Activated naive CD4-positive, alpha-beta T cell treated with anti-CD3 and anti-CD28 coated beads for 36 hours (primary cell): ENCODE measurements at regions of chr6 and their contacts with region 1.

Region 1: DNA sequence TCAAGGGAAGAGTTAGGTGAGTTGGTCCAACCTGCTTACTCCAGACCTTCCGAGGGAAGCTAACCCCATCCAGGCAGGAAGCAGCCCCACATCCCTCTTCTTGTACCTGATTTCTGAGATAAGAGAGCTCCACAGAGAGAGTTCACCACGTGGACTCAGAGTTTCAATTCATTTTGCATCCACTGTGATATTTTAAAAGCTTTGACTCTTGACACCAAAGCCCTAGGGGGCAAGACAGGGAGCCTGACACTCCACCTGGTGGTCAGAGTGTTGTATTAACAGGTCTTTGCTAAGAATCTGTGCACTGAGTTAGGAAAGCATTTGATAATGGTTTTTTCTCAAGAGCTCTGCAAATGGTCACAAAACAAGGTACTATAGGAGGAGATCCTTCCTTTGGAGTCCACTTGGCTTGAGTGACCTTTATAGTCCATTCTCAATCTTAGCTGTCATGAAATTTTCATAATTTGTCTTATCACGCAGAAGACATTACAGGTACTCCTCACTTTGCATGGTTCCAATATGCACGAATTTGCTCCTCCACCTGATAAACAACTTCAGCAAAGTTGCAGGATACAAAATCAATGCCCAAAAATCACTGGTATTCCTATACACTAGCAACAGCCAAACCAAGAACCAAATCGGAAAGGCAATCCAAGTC is 56.2 kb upstream of the RIPOR2 start:
- DNase-seq: peak; percentile 89
- H3K4me3 Mint-ChIP-seq: peak overlapping the region; percentile 37
- H3K27ac Mint-ChIP-seq: peak overlapping the region; percentile 86
- H3K4me1 Mint-ChIP-seq: peaks cover 68% of the 10 kb centered on the region
- H3K27me3 Mint-ChIP-seq: no peaks in the 10 kb centered on the region

Region 2: DNA sequence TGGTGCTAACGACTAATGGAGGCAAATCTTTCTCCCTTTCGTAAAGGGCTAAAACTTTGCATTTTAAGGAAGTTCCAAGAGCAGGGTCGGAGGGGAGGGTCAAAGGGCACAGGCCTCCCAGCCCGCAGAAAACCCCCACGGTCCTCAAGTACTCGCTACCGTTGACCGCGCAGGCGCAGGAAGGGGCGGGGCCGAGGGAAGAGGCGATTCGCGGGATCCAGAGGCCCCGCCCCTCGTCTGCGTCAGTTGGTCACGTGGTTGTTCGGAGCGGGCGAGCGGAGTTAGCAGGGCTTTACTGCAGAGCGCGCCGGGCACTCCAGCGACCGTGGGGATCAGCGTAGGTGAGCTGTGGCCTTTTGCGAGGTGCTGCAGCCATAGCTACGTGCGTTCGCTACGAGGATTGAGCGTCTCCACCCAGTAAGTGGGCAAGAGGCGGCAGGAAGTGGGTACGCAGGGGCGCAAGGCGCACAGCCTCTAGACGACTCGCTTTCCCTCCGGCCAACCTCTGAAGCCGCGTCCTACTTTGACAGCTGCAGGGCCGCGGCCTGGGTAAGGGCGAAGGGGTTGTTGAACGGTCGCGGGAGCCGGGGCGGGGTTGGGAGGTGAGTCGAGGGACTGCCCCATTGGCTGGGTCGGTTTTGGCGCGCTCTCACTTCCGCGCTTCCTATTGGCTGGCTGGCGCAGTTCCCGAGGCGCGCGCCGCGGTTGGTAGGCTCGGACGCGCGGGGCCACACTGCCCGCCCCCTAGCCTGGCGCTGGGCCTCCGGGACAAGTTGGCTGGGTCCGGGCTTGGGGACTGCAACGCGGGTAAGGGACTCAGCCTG is 217.0 kb before region 1 on chr6 and contains the start of gene GMNN:
- CTCF ChIA-PET with region 1: no interaction called
- intact Hi-C with region 1: loop called (anchors 1 kb)
- DNase-seq: peak; percentile 99
- H3K4me3 Mint-ChIP-seq: peak within 1 kb of the TSS; percentile 96
- H3K27ac Mint-ChIP-seq: peak within 1 kb of the TSS; percentile 98
- H3K4me1 Mint-ChIP-seq: peaks cover 30% of the 10 kb centered on the region
- H3K27me3 Mint-ChIP-seq: no peaks in the 10 kb centered on the region
- total RNA-seq, gene GMNN: 84.9 to 85.1 TPM

Region 3: DNA sequence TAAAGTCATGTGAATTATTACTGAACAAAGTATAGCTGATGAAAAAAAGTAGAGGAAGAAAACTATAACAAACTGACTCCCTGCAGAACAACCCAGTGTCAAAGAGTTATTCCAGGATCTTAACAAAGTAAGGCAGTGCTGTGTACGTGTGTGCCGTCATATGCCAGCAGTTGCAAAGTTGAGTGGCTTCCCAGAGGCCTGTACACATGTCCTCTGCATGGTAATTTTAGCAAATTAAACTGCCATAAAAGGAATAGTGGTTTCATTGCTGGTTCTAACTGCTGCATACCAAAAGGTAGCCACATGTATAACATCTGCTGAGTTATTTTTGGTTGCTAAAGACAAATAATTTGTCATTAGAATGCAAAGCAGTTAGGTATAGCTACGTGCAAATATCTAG is 100.9 kb before region 1 on chr6:
- CTCF ChIA-PET with region 1: interaction called, 17 read pairs
- intact Hi-C with region 1: no loop called
- DNase-seq: peak; percentile 31
- H3K4me3 Mint-ChIP-seq: peak overlapping the region; percentile 25
- H3K27ac Mint-ChIP-seq: peak overlapping the region; percentile 90
- H3K4me1 Mint-ChIP-seq: peaks cover 91% of the 10 kb centered on the region
- H3K27me3 Mint-ChIP-seq: no peaks in the 10 kb centered on the region

Region 4: DNA sequence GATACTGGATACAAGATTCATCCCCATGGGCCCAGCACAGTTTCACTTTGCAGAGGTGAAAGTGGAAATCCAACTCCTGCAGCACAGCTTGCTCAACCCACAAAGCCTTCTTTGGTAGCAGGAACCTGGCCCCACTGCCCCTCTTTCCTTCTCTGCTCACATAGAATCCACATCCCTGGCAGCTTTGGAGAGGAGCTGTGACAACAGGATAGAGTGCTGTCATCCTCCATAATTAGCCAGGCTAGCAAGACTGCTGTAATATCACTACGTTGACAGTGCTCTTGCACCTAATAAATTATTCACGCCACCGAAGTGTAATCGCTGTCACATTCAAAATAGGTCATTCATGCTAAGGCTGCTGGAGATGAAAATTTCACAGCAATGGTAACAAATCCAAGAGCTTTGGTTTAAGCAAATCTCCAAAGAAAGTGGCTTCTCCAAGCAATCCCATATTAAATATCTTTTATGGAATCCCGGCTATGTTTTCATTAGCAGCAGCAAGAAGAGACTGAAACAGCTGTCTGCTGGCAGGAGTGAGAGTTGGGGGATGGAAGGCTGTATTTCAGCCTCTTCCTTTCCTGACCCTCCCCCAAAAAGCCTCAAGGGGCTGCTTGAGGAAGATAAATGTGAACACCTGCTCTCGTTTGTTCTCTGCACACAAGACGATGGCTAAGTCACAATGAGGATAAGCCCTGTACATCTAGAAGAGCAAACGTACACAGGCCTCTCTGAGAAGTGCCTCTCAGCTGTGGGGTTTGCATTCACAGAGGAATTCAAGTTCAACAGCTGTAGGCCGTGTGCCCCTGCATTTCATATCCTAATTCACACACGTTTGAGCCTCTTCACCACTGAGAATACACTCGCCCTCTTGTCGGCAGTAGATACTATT is 72.7 kb before region 1 on chr6:
- CTCF ChIA-PET with region 1: interaction called, 48 read pairs
- intact Hi-C with region 1: no loop called
- DNase-seq: peak; percentile 60
- H3K4me3 Mint-ChIP-seq: peak overlapping the region; percentile 57
- H3K27ac Mint-ChIP-seq: peak overlapping the region; percentile 95
- H3K4me1 Mint-ChIP-seq: peaks cover 90% of the 10 kb centered on the region
- H3K27me3 Mint-ChIP-seq: no peaks in the 10 kb centered on the region

Region 5: DNA sequence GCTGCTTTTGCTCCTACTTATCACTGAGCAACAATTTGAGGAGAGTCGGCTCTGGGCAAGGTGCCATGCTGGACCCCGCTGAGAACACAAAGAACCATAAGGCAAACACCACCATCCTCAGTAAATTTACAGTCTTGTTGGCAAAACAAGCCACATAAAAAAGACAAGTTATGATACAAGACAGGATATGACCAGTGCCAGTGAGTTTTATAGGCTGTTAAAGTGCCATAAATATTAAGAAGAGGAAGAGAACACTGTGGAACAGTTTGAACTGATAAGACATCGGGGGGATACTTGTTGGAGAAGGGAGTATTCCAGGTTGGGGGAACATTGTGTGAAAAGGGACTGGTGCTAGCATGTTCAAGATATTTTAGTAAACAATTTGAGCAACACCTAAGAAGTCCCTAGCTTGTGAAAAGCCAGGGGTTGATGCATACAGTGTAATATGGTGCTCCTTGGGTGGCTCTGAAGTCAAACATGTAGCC is 30.9 kb before region 1 on chr6:
- CTCF ChIA-PET with region 1: interaction called, 18 read pairs
- intact Hi-C with region 1: no loop called
- DNase-seq: no peak
- H3K4me3 Mint-ChIP-seq: peak overlapping the region; percentile 23
- H3K27ac Mint-ChIP-seq: peak overlapping the region; percentile 73
- H3K4me1 Mint-ChIP-seq: peaks cover 72% of the 10 kb centered on the region
- H3K27me3 Mint-ChIP-seq: no peaks in the 10 kb centered on the region

Region 6: GRCh38 chr6:24980507-24981387 is 11.2 kb before region 1 on chr6:
- CTCF ChIA-PET with region 1: interaction called, 39 read pairs
- intact Hi-C with region 1: no loop called
- DNase-seq: no peak
- H3K4me3 Mint-ChIP-seq: no peak overlapping the region
- H3K27ac Mint-ChIP-seq: no peak overlapping the region
- H3K4me1 Mint-ChIP-seq: peaks cover 61% of the 10 kb centered on the region
- H3K27me3 Mint-ChIP-seq: no peaks in the 10 kb centered on the region

Region 7: DNA sequence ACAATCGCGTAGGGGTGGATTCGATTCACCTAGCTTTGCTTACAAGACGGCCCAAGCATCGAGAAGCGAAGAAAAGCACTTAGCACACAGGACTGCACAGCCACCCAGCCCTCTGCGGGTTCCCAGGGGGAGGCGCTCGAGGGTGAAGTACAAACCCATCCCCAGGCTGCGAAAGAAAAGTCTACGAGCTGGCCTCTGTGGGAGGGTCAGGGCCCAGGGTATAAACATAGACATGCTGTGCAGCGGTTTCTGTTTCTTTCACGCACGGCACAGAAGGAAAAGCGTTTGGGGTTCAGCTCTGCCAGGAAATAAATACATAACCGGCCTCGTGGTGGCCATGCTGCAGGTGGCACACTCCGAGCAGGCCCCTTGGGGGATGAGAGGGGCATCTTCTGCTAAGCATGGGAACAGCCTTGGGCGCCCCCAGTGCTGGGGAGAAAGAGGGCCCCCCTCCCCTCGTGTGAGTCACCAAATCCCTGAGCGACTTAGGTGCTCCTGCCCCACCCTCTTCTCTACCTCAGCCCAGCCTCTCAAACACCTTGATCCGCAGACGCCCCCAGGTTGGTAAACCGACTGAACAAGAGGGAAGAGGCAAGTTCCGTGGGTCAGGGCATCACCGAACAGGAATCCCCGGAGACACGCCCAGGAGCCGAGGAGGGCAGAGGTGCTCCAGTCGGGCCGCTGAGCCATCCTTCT is 35.4 kb after region 1 on chr6:
- CTCF ChIA-PET with region 1: interaction called, 24 read pairs
- intact Hi-C with region 1: no loop called
- DNase-seq: peak; percentile 90
- H3K4me3 Mint-ChIP-seq: peak overlapping the region; percentile 65
- H3K27ac Mint-ChIP-seq: peak overlapping the region; percentile 78
- H3K4me1 Mint-ChIP-seq: peaks cover 52% of the 10 kb centered on the region
- H3K27me3 Mint-ChIP-seq: no peaks in the 10 kb centered on the region

Region 8: DNA sequence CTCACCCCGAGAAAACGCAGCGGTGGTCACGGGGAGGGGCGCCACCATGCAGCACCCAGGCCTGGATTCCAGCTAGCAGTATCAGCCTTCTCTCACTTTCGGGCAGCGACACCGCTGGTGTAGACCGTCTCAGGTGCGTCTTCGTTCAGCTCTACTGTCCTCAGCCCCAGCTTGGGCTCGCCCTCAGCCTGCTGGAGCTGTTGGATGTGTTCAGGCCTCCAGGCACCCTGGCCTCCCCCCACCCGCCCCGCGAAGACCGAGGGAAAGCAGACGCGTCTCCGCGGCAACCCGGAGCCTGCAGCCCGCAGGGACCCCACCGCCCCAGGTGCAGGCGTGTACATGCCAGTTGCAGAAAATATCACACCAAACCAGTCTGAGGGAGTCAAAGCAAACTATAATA is 226.4 kb after region 1 on chr6:
- CTCF ChIA-PET with region 1: no interaction called
- intact Hi-C with region 1: no loop called
- DNase-seq: no peak
- H3K4me3 Mint-ChIP-seq: no peak overlapping the region
- H3K27ac Mint-ChIP-seq: no peak overlapping the region
- H3K4me1 Mint-ChIP-seq: no peaks in the 10 kb centered on the region
- H3K27me3 Mint-ChIP-seq: no peaks in the 10 kb centered on the region

Region 9: DNA sequence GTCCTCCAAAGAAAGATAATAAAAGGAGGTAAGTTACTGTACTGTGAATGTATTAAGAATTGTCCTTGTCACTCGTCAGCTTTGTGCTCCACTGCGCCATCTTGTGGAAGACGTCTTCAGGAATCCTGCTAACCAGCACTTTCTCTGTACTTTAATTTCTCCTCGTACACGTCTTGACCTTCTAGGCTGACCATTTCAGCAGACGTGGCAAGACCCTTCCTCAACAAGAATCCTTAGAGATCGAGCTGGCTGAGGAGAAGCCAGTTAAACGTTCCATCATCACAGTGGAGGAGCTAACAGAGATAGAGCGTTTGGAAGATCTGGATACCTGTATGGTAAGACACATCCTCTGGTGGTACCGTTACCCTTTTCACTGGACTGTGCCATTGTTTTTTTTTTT is 564.6 kb after region 1 on chr6:
- CTCF ChIA-PET with region 1: no interaction called
- intact Hi-C with region 1: no loop called
- DNase-seq: peak; percentile 92
- H3K4me3 Mint-ChIP-seq: no peak overlapping the region
- H3K27ac Mint-ChIP-seq: no peak overlapping the region
- H3K4me1 Mint-ChIP-seq: no peaks in the 10 kb centered on the region
- H3K27me3 Mint-ChIP-seq: no peaks in the 10 kb centered on the region